Left ventricle myocardium superior (tissue), 1 donor: ENCODE measurements at regions of chr13 and their contacts with region 1.

Region 1: GRCh38 chr13:76461999-76462398 is 424.2 kb downstream of the KCTD12 start:
- DNase-seq: no peak
- ATAC-seq: no peak

Region 2: GRCh38 chr13:76225815-76226489 is 236.0 kb before region 1 on chr13:
- intact Hi-C with region 1: loop called (anchors 10 kb)
- DNase-seq: peak; percentile 59
- ATAC-seq: peak; percentile 95

Region 3: GRCh38 chr13:76406243-76406642 is 55.8 kb before region 1 on chr13:
- intact Hi-C with region 1: no loop called
- DNase-seq: no peak
- ATAC-seq: no peak